Activated naive CD8-positive, alpha-beta T cell treated with anti-CD3 and anti-CD28 coated beads, Interleukin-2, amount 10 ng/mL, durations not matched to agents 7 days and 5 days (primary cell): ENCODE measurements at regions of chr5 and their contacts with region 1.

Region 1: DNA sequence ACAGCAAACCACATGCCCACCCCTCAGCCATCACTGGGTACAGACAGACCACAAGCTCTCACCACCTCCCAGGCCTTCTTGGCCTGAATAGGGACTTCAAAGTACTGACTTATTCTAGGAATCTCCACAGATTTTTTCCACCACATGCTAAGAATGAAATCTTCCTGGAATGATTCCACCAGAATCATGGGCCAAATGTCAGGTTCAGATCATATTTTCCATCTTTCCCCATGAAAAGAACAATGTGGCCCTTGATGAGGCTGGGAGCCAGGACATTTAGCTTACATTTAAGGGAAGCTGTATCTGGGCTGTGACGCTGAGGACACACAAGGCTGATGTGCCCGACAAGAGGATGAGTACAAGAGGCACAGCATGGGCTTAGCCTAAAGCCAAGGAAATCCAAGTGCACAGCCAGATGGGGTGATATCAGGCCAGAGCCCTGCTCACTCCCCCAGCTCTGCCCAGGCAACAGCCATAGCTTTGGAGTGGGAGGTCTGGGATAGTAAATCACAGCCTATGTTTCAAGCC is 28.1 kb downstream of the ACSL6 start:
- DNase-seq: no peak
- ATAC-seq: no peak
- H3K4me3 Mint-ChIP-seq: peak overlapping the region; percentile 12
- H3K27ac Mint-ChIP-seq: no peak overlapping the region
- H3K4me1 Mint-ChIP-seq: peaks cover 26% of the 10 kb centered on the region
- H3K27me3 Mint-ChIP-seq: peaks cover 10% of the 10 kb centered on the region

Region 2: DNA sequence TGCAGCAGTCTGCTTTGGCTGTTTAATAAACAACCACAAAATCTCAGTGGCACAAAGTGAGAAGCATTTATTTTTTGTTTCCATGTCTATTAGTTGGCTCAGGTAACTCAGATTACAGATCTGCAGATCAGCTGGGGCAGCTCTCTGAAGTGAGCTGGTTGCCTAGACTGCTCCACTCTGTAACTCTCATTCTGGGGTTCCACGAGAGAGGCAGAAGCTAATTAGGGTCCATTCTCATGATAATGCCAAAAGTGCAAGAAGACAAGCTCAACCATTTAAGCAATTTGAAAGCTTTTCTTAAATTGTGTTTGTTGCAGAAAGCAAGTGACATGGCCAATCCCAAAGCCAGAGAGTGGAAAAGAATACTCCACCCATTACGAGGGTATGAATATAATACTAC is 51.1 kb before region 1 on chr5:
- POLR2A ChIA-PET with region 1: no interaction called
- DNase-seq: no peak
- ATAC-seq: no peak
- H3K4me3 Mint-ChIP-seq: no peak overlapping the region
- H3K27ac Mint-ChIP-seq: no peak overlapping the region
- H3K4me1 Mint-ChIP-seq: peaks cover 2% of the 10 kb centered on the region
- H3K27me3 Mint-ChIP-seq: peaks cover 9% of the 10 kb centered on the region

Region 3: DNA sequence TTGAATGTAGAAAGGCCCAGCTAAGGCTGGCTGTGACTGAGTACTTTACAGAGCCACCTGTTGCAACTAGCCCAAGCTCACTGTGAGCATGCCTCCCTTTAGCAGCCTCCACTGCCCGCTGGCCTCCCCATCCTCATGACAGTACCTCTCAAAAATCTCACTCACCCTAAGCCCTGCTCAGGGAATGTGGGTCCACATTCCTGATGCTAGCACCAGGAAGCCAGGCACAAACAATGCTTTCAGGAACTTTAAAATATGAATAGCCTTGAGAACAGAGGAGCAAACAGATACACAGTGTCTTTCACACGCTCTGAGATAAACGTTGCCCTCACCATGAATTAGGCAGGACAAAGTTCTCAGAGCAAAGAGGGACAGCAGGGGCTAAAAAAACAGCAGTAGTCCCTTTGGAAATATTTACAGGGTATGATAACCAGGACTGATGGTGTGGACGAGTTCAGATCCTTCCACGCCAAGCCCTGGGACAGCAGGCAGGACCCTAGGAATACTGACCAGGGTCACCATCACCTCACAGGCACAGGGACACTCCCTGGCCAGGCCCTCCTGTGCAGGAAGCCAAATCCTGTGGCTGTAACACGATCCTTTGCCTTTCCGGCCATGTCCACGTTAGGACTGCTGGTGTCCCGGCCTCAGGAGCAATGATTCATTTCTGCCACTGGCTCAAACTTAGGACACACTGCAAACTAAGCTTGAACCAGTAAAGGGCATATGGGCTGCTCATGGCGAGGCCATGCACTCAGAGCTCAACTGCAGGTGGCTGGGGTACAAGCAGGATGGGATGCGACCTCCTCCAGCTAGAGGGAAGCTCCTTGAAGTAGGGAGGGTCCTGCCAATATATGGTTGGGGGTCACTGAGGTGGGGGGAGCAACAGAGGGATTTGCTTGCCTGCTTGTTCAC is 18.6 kb after region 1 on chr5:
- POLR2A ChIA-PET with region 1: interaction called, 18 read pairs
- DNase-seq: no peak
- ATAC-seq: peak; percentile 29
- H3K4me3 Mint-ChIP-seq: peak overlapping the region; percentile 74
- H3K27ac Mint-ChIP-seq: peak overlapping the region; percentile 56
- H3K4me1 Mint-ChIP-seq: peaks cover 42% of the 10 kb centered on the region
- H3K27me3 Mint-ChIP-seq: peaks cover 4% of the 10 kb centered on the region